Caco-2 (cell line): ENCODE measurements at regions of chr5 and their contacts with region 1.

Region 1: DNA sequence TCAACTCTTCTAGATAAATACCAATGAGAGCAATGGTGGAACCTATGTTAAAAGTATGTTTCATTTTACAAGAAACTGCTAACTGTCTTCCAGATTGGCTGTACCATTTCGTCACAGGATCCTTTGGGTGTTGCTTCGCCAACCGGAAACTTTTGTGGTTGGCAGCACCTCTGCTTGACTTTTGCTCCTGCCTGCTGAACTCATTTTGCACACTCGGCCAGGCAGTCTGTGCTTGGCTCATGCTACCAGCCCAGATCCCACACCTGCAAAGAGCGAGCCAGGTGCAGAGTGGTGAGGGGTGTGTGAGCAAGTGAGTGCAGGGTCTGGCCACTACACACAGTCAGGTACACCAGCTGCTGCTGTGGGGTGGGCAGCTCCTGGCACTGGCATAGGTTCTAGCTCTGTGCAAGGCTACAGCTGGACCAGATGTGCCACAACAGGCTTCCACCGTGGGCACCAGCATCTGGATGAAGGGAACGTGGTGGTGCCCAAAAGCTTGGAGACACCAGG is 422.3 kb downstream of the PRR16 start:
- DNase-seq: no peak
- H3K4me3 ChIP-seq: no peak overlapping the region
- H3K4me3 Mint-ChIP-seq: no peak overlapping the region
- H3K27ac Mint-ChIP-seq: no peak overlapping the region
- H3K4me1 ChIP-seq: no peaks in the 10 kb centered on the region
- H3K4me1 Mint-ChIP-seq: no peaks in the 10 kb centered on the region
- H3K27me3 ChIP-seq: no peaks in the 10 kb centered on the region
- H3K27me3 Mint-ChIP-seq: no peaks in the 10 kb centered on the region
- CTCF ChIP-seq: no peak

Region 2: DNA sequence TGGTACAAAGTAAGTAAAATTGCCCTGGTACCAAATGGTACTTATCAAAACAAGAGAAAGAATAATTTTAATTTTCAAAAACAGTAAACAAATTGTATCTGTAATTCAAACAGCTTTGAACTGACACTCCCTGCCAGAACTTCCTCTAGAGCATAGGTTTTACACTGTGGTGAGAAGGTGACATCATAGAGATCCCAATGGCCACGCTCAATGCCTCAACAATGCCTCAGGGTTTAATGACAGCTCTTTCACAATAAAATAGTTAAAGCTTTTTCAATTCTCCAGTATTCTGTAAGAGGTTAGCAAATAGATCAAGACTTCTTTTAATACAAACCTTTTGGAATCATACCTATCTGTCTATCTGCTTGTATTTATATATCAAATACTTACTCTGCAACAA is 14.8 kb after region 1 on chr5:
- CTCF ChIA-PET with region 1: no interaction called
- POLR2A ChIA-PET with region 1: no interaction called
- intact Hi-C with region 1: loop called (anchors 1 kb)
- DNase-seq: no peak
- H3K4me3 ChIP-seq: no peak overlapping the region
- H3K4me3 Mint-ChIP-seq: no peak overlapping the region
- H3K27ac Mint-ChIP-seq: no peak overlapping the region
- H3K4me1 ChIP-seq: no peaks in the 10 kb centered on the region
- H3K4me1 Mint-ChIP-seq: no peaks in the 10 kb centered on the region
- H3K27me3 ChIP-seq: no peaks in the 10 kb centered on the region
- H3K27me3 Mint-ChIP-seq: no peaks in the 10 kb centered on the region
- CTCF ChIP-seq: no peak

Region 3: DNA sequence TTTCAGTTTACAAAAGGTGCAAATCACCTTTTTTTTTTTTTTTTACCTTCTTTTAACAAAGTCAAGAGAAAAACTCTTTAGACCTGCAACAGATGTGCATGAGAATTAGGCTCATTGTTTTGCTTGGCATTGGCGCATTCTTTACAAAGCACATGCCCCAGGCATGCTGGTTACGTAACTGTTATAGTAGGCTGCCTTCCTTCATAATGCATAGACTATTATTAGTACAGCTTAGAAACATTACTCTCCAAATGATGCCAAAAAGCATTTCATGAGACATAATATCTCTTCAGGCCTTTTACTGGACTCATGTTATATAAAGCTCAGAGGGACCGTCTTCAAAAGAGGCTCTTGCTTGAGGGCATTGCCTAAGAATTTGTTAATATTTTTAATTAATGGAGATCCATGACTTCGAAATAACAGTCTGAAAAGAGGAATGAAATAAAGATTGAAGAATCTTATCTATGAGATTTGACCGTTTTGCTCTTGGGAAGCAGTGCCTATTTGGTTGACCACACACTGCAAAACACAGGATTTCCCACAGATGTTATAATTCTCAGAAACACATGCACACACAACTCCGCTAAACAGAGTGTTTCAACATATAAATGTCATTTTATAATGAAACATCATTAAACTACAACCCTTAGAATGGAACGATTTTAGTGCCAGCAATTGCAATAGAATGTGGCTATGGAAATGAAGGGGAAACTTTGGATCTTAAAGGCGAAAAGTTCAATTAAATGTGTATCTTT is 56.4 kb after region 1 on chr5:
- CTCF ChIA-PET with region 1: no interaction called
- POLR2A ChIA-PET with region 1: no interaction called
- intact Hi-C with region 1: no loop called
- DNase-seq: no peak
- H3K4me3 ChIP-seq: no peak overlapping the region
- H3K4me3 Mint-ChIP-seq: no peak overlapping the region
- H3K27ac Mint-ChIP-seq: no peak overlapping the region
- H3K4me1 ChIP-seq: no peaks in the 10 kb centered on the region
- H3K4me1 Mint-ChIP-seq: no peaks in the 10 kb centered on the region
- H3K27me3 ChIP-seq: no peaks in the 10 kb centered on the region
- H3K27me3 Mint-ChIP-seq: no peaks in the 10 kb centered on the region
- CTCF ChIP-seq: no peak